PC-9 (cell line): ENCODE measurements at regions of chr22 and their contacts with region 1.

Region 1: DNA sequence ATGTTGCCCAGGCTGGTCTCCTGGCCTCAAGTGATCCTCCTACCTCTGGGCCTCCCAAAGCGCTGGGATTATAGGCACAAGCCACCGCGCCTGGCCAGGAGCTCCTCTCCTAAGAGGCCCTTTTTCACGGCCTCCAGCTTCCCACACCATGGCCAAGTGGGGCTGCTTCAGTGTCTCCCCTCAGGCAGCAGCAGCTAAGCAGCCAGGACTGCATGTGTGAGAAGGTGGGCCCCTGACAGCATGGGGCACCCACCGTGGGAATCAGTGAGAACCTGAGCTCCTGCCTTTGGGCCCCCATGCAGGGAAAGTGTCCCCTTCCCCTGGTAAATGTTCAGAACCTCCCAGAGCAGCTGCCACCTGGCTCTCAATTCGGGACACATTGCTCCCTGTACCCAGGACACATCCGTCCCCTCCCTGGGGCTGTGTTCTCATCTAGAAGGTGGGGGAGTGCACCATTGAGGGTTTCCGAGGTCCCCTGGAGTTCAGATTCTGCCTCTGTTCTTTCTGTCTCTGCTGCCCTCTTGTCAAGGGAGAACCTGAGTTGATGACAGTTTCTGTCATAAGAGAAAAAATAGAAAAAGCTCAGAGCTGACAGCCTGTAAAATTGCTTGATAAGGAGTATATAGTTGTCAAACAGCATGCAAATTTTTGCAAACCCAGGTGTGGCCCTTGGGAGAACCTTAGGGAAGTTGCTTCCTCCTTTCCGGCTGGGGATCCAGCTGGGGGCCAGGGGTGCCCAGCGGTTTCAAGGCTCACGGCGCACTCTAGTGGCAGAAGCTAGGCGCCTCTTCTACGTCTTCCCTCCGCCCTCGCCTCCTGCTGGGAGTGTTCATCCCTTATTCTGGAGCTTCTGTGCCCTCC is 29.7 kb downstream of the FAM83F start:
- DNase-seq: peak; percentile 65 to 75
- H3K4me3 ChIP-seq: no peak overlapping the region
- H3K27ac ChIP-seq: no peak overlapping the region
- H3K4me1 ChIP-seq: no peaks in the 10 kb centered on the region
- H3K27me3 ChIP-seq: no peaks in the 10 kb centered on the region
- CTCF ChIP-seq: peak; percentile 97

Region 2: GRCh38 chr22:39543095-39543494 is 481.3 kb before region 1 on chr22:
- CTCF ChIA-PET with region 1: interaction called, 5 read pairs
- POLR2A ChIA-PET with region 1: no interaction called
- intact Hi-C with region 1: loop called (anchors 1 kb)
- DNase-seq: peak in 1 of 2 experiments; percentile 28
- H3K4me3 ChIP-seq: no peak overlapping the region
- H3K27ac ChIP-seq: no peak overlapping the region
- H3K4me1 ChIP-seq: no peaks in the 10 kb centered on the region
- H3K27me3 ChIP-seq: peaks cover 14% of the 10 kb centered on the region
- CTCF ChIP-seq: peak; percentile 38; the same call in 1 of the 2 replicates

Region 3: GRCh38 chr22:39622881-39623367 is 401.5 kb before region 1 on chr22:
- CTCF ChIA-PET with region 1: no interaction called
- POLR2A ChIA-PET with region 1: no interaction called
- intact Hi-C with region 1: loop called (anchors 2 kb)
- DNase-seq: peak in 1 of 2 experiments; percentile 65
- H3K4me3 ChIP-seq: no peak overlapping the region
- H3K27ac ChIP-seq: no peak overlapping the region
- H3K4me1 ChIP-seq: peaks cover 20% of the 10 kb centered on the region
- H3K27me3 ChIP-seq: no peaks in the 10 kb centered on the region
- CTCF ChIP-seq: peak; percentile 88

Region 4: DNA sequence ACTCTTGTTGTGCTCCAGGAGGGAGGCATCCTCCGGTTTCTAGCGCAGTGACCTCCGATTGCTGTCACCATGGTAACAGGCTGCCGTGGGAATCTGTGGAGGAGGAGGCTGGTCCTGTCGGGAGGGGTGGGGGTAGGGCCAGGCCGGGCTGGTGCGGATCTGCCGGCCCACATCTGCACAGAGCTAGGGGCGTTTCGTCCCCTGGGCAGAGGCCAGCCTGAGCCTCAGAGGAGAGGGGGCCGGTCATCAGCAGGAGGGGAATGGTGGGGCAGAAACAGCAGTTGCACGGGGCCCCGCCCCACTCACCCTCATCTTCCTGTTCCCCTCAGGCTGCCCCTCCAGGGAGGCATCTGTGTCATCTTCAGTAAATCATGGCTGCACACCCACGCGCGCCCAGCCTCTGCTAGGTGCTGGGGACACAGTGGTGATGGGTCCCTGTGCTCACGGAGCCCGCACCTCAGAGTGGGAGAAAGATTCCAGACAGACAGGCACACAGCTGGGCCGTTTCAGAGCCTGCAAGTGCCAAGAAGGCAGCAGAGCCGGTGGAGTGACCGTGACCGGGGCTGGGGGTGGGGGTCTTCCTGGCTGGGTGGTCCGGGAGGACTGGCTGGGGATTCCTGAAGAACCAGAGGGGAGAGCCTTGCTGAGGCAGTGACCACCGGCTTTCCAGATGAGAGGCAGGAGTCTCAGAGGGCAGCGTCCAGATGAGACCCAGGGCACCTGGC is 333.4 kb before region 1 on chr22:
- CTCF ChIA-PET with region 1: no interaction called
- POLR2A ChIA-PET with region 1: no interaction called
- intact Hi-C with region 1: loop called (anchors 10 kb)
- DNase-seq: no peak
- H3K4me3 ChIP-seq: no peak overlapping the region
- H3K27ac ChIP-seq: no peak overlapping the region
- H3K4me1 ChIP-seq: 0 out of 2 replicates have a peak, but pooled peaks cover 4% of the 10 kb centered on the region
- H3K27me3 ChIP-seq: peaks cover 55% of the 10 kb centered on the region
- CTCF ChIP-seq: no peak

Region 5: DNA sequence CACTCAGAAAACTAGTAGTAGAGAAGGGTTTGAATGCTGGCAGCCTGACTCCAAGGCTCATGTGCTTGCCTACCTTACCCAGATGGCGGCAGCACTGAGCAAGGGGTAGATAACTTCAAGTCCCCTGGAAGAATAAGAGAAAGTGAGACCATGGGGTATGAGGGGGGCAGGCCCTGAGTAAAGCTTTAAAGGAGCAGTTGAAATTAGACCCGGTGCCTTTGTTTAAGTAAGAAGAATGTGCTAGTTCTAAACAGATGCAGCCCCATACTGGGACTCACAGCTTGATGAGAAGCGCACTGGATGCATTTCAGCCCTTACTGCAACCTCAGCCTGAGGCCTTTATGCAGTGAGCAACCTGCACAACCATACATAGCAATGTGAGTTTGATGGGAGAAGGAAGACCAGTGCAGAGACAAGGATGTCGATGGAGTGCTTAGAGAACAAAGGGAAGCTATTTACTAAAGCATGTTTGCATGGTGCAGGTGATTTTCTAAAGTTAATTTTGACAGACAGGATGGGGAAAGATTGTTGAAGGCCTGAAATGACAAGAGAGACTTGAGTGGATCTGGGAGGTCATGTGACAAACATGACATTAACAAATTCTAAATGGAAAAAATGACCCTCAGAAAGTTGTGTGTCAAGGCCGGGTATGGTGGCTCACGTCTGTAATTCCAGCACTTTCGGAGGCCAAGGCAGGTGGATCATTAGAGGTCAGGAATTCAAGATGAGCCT is 91.3 kb before region 1 on chr22:
- CTCF ChIA-PET with region 1: interaction called, 3 read pairs
- POLR2A ChIA-PET with region 1: no interaction called
- intact Hi-C with region 1: loop called (anchors 2 kb)
- DNase-seq: peak in 1 of 2 experiments; percentile 29
- H3K4me3 ChIP-seq: no peak overlapping the region
- H3K27ac ChIP-seq: no peak overlapping the region
- H3K4me1 ChIP-seq: no peaks in the 10 kb centered on the region
- H3K27me3 ChIP-seq: peaks cover 94% of the 10 kb centered on the region
- CTCF ChIP-seq: peak; percentile 87

Region 6: DNA sequence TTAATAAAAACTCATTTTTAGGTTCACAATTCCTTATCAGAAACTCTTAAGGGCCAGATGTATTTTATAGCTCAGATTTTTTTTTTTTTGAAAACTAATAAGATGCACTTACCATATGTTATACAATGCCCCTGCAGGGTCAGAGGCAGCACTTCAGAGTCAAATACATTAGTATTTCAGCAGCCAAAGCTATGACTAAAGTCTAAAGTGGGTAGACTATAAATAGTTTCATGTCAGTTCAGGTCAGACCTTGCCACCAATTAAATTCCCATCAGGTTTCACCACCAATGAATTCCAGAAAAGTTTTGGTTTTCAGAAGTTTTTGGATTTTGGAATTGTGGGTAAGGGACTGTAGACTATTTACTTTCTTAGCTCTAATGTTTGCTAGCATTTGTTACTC is 46.3 kb after region 1 on chr22:
- CTCF ChIA-PET with region 1: no interaction called
- POLR2A ChIA-PET with region 1: no interaction called
- intact Hi-C with region 1: no loop called
- DNase-seq: no peak
- H3K4me3 ChIP-seq: no peak overlapping the region
- H3K27ac ChIP-seq: no peak overlapping the region
- H3K4me1 ChIP-seq: peaks cover 6% of the 10 kb centered on the region
- H3K27me3 ChIP-seq: no peaks in the 10 kb centered on the region
- CTCF ChIP-seq: no peak

Region 7: DNA sequence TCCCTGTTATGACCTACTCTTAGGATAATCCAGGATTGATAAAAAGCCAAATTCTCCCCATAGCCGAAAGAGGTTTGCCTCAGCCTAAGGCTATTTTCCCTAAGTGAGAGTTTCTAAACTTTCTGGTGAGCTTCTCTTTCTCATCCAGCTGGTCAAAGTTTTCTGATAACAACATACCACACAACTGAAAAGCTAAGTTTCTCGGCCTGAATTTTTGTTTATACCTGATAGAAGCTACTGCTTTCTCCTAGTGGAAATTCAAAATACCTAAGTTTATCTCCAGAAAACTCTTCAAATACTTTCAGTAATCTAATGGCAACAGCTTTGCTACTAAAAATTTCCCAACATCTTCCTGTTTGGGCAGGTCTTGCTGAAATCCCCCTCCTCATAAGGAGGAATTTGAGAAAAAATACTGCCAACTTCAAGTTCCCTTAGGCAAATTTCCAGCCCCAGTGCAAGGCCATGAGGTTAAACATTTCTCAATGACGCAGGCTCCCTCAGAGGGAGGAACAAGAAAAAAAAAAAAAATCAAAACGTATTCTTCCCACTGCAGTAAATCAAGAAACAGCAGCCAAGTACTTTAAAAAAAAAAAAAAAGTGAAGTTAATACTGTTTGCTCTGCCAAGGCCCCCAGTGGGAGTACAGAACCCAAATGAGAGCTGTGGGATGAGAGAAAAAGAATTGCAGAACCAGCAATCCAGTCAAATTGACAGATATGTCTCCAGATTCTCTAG is 485.1 kb after region 1 on chr22:
- CTCF ChIA-PET with region 1: no interaction called
- POLR2A ChIA-PET with region 1: no interaction called
- intact Hi-C with region 1: no loop called
- DNase-seq: peak; percentile 45 to 87
- H3K4me3 ChIP-seq: peak overlapping the region; percentile 33; the same call in 1 of the 2 replicates
- H3K27ac ChIP-seq: peak overlapping the region; percentile 94
- H3K4me1 ChIP-seq: peaks cover 78% of the 10 kb centered on the region
- H3K27me3 ChIP-seq: no peaks in the 10 kb centered on the region
- CTCF ChIP-seq: no peak